Transverse colon (tissue), 4 donors: ENCODE measurements at regions of chr4 and their contacts with region 1.

Region 1: GRCh38 chr4:142984871-142985585 is 138.9 kb upstream of the INPP4B start:
- DNase-seq: no peak
- H3K4me3 ChIP-seq: no peak overlapping the region
- H3K27ac ChIP-seq: no peak overlapping the region
- H3K4me1 ChIP-seq: no peaks in the 10 kb centered on the region
- H3K27me3 ChIP-seq: no peaks in the 10 kb centered on the region
- CTCF ChIP-seq: peak; percentile 27 to 51 (median 47)
- EP300 ChIP-seq: no peak
- POLR2A ChIP-seq: no peak

Region 2: GRCh38 chr4:142752202-142752786 is 232.7 kb before region 1 on chr4:
- in situ Hi-C with region 1: no loop called
- intact Hi-C with region 1: no loop called
- DNase-seq: no peak
- H3K4me3 ChIP-seq: no peak overlapping the region
- H3K27ac ChIP-seq: peak overlapping the region in 1 of 4 donors; percentile 21
- H3K4me1 ChIP-seq: no peaks in the 10 kb centered on the region
- H3K27me3 ChIP-seq: no peaks in the 10 kb centered on the region
- CTCF ChIP-seq: no peak
- EP300 ChIP-seq: no peak
- POLR2A ChIP-seq: no peak

Region 3: GRCh38 chr4:142999915-143000314 is 14.9 kb after region 1 on chr4:
- in situ Hi-C with region 1: no loop called
- intact Hi-C with region 1: loop called (anchors 1 kb)
- DNase-seq: no peak
- H3K4me3 ChIP-seq: no peak overlapping the region
- H3K27ac ChIP-seq: no peak overlapping the region
- H3K4me1 ChIP-seq: no peaks in the 10 kb centered on the region
- H3K27me3 ChIP-seq: no peaks in the 10 kb centered on the region
- CTCF ChIP-seq: no peak
- EP300 ChIP-seq: no peak
- POLR2A ChIP-seq: no peak

Region 4: GRCh38 chr4:143085224-143085623 is 100.2 kb after region 1 on chr4:
- in situ Hi-C with region 1: no loop called
- intact Hi-C with region 1: no loop called
- DNase-seq: no peak
- H3K4me3 ChIP-seq: no peak overlapping the region
- H3K27ac ChIP-seq: peak overlapping the region; percentile 43 to 63 (median 58)
- H3K4me1 ChIP-seq: peaks cover 4 to 41% (median 18%) of the 10 kb centered on the region in 4 donors
- H3K27me3 ChIP-seq: no peaks in the 10 kb centered on the region
- CTCF ChIP-seq: peak; percentile 24 to 55 (median 37)
- EP300 ChIP-seq: no peak
- POLR2A ChIP-seq: no peak

Region 5: GRCh38 chr4:143184217-143185116 is 199.4 kb after region 1 on chr4 and contains the start of gene USP38:
- in situ Hi-C with region 1: loop called in 1 of 4 experiments (anchors 25 kb)
- intact Hi-C with region 1: no loop called
- DNase-seq: peak; percentile 96
- H3K4me3 ChIP-seq: peak within 1 kb of the TSS; percentile 72 to 91 (median 82)
- H3K27ac ChIP-seq: peak within 1 kb of the TSS; percentile 96 to 98 (median 96)
- H3K4me1 ChIP-seq: peaks cover 7 to 43% (median 27%) of the 10 kb centered on the region in 4 donors
- H3K27me3 ChIP-seq: no peaks in the 10 kb centered on the region
- CTCF ChIP-seq: peak in 3 of 5 experiments; percentile 12 to 38 (median 29)
- EP300 ChIP-seq: peak; percentile 15
- POLR2A ChIP-seq: peak; percentile 92
- total RNA-seq, gene USP38: 25.9 to 47.8 (median 41.4) TPM